Caco-2 (cell line): ENCODE measurements at regions of chr1 and their contacts with region 1.

Region 1: GRCh38 chr1:222769181-222769580 is 32.2 kb downstream of the FAM177B start:
- DNase-seq: peak in 1 of 2 experiments; percentile 35
- H3K4me3 ChIP-seq: no peak overlapping the region
- H3K4me3 Mint-ChIP-seq: no peak overlapping the region
- H3K27ac Mint-ChIP-seq: no peak overlapping the region
- H3K4me1 ChIP-seq: no peaks in the 10 kb centered on the region
- H3K4me1 Mint-ChIP-seq: no peaks in the 10 kb centered on the region
- H3K27me3 ChIP-seq: no peaks in the 10 kb centered on the region
- H3K27me3 Mint-ChIP-seq: no peaks in the 10 kb centered on the region
- CTCF ChIP-seq: peak in 1 of 2 experiments; percentile 37

Region 2: GRCh38 chr1:222736972-222737371 is 32.2 kb before region 1 on chr1 and contains the start of gene FAM177B:
- CTCF ChIA-PET with region 1: interaction called, 3 read pairs
- POLR2A ChIA-PET with region 1: no interaction called
- intact Hi-C with region 1: loop called (anchors 1 kb)
- DNase-seq: no peak
- H3K4me3 ChIP-seq: no peak within 1 kb of the TSS
- H3K4me3 Mint-ChIP-seq: no peak within 1 kb of the TSS
- H3K27ac Mint-ChIP-seq: no peak within 1 kb of the TSS
- H3K4me1 ChIP-seq: no peaks in the 10 kb centered on the region; the same call in 1 of the 2 replicates
- H3K4me1 Mint-ChIP-seq: no peaks in the 10 kb centered on the region
- H3K27me3 ChIP-seq: no peaks in the 10 kb centered on the region
- H3K27me3 Mint-ChIP-seq: no peaks in the 10 kb centered on the region
- CTCF ChIP-seq: no peak
- total RNA-seq, gene FAM177B: 0.70 TPM in 1 of 2 replicates, not detected in the other

Region 3: GRCh38 chr1:222814536-222815439 is 45.6 kb after region 1 on chr1 and contains the start of gene DISP1:
- CTCF ChIA-PET with region 1: no interaction called
- POLR2A ChIA-PET with region 1: no interaction called
- intact Hi-C with region 1: no loop called
- DNase-seq: peak; percentile 83 to 86
- H3K4me3 ChIP-seq: peak within 1 kb of the TSS; percentile 55
- H3K4me3 Mint-ChIP-seq: peak within 1 kb of the TSS; percentile 97
- H3K27ac Mint-ChIP-seq: peak within 1 kb of the TSS; percentile 72
- H3K4me1 ChIP-seq: peaks cover 25% of the 10 kb centered on the region
- H3K4me1 Mint-ChIP-seq: peaks cover 19% of the 10 kb centered on the region
- H3K27me3 ChIP-seq: no peaks in the 10 kb centered on the region
- H3K27me3 Mint-ChIP-seq: no peaks in the 10 kb centered on the region
- CTCF ChIP-seq: no peak
- total RNA-seq, gene DISP1: 6.6 and 7.1 TPM in 2 replicates